MCF 10A (cell line): ENCODE measurements at regions of chr12 and their contacts with region 1.

Region 1: GRCh38 chr12:115341442-115341841 is 657.5 kb upstream of the TBX3 start:
- DNase-seq: peak; percentile 99
- H3K4me3 Mint-ChIP-seq: peak overlapping the region; percentile 31
- H3K27ac Mint-ChIP-seq: peak overlapping the region; percentile 94
- H3K4me1 Mint-ChIP-seq: peaks cover 21% of the 10 kb centered on the region
- H3K27me3 Mint-ChIP-seq: no peaks in the 10 kb centered on the region
- CTCF ChIP-seq: no peak

Region 2: DNA sequence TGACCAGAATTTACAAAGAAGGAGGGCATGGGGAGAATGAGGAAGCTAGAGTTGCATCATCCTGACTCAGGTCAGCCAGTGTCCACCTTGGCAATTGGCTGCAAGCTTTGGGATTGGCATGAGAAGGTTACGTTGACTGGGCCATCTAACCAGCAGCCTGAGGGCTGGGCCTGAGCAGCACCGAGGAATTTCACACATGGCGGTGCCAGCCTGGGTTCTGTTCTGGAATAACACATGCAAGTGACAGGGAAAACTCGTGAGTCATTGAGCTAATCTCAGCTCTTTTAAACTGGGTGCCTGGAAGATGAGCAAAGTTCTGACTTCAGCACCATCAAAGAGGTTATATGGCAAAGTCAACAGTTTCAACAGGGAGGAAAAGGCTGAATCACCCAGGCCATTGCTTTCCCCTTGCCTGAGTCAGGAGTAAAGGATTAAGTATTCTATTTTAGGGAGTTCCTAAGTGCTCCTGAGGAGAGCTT is 114.3 kb before region 1 on chr12:
- CTCF ChIA-PET with region 1: no interaction called
- POLR2A ChIA-PET with region 1: interaction called, 4 read pairs
- intact Hi-C with region 1: loop called (anchors 1 kb)
- DNase-seq: peak; percentile 84
- H3K4me3 Mint-ChIP-seq: no peak overlapping the region
- H3K27ac Mint-ChIP-seq: no peak overlapping the region
- H3K4me1 Mint-ChIP-seq: peaks cover 11% of the 10 kb centered on the region
- H3K27me3 Mint-ChIP-seq: no peaks in the 10 kb centered on the region
- CTCF ChIP-seq: no peak